ENCODE measurements at regions of chr1 and their contacts with region 1.

Region 1: DNA sequence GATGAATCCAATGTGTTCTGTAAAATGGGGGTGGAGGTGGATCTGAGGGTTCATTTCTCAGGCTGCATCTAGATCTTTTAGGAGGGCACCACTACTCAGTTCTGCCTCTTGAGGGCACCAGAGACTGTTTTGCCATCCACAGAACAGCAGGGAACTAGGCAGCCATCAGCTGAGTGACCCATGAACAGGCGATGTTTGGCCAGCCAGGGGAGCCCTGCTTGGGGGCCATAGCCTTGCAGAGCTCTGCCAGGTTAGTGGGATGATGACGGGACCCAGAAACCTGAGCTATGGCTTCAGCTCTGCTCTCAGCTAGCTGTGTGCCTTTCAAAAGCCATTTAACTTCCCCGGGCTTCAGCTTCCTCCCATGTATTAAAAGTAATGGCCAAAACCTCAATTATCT is 13.4 kb upstream of the NOS1AP start:
- DNase-seq: no peak
- H3K4me3 ChIP-seq: no peak overlapping the region
- H3K27ac ChIP-seq: no peak overlapping the region
- H3K4me1 ChIP-seq: no peaks in the 10 kb centered on the region
- H3K27me3 ChIP-seq: no peaks in the 10 kb centered on the region
- CTCF ChIP-seq: peak; percentile 64 to 83 (median 81)
- POLR2A ChIP-seq: no peak

Region 2: DNA sequence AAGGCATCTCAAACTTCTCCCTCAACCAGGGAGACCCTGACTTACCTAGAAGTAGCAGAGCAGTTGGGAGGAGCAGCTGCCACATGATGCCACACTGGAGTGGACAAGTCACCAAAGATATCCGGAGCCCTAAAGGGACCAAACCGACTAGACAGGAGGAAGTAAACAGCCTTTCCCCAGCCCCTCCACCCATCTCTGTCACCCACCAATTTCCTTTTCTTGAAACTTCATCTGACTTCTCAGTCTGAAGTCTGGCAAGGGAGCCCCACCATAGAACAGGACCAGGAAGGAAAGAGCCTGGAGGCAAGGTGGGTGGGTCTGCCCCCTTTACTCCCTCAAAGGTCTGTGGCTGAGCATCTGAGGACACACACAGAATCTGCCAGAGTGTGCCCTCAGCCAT is 506.4 kb before region 1 on chr1 and contains the start of gene FCGR3A:
- intact Hi-C with region 1: no loop called
- DNase-seq: no peak
- H3K4me3 ChIP-seq: no peak within 1 kb of the TSS
- H3K27ac ChIP-seq: no peak within 1 kb of the TSS
- H3K4me1 ChIP-seq: no peaks in the 10 kb centered on the region
- H3K27me3 ChIP-seq: no peaks in the 10 kb centered on the region
- CTCF ChIP-seq: no peak
- POLR2A ChIP-seq: no peak
- total RNA-seq, gene FCGR3A: 14.2 TPM

Region 3: GRCh38 chr1:162276493-162276892 is 220.4 kb after region 1 on chr1:
- intact Hi-C with region 1: loop called (anchors 10 kb)
- DNase-seq: no peak
- H3K4me3 ChIP-seq: no peak overlapping the region
- H3K27ac ChIP-seq: no peak overlapping the region
- H3K4me1 ChIP-seq: no peaks in the 10 kb centered on the region
- H3K27me3 ChIP-seq: no peaks in the 10 kb centered on the region
- CTCF ChIP-seq: no peak
- POLR2A ChIP-seq: no peak

Region 4: GRCh38 chr1:162327144-162327793 is 271.2 kb after region 1 on chr1:
- intact Hi-C with region 1: no loop called
- DNase-seq: no peak
- H3K4me3 ChIP-seq: no peak overlapping the region
- H3K27ac ChIP-seq: no peak overlapping the region
- H3K4me1 ChIP-seq: no peaks in the 10 kb centered on the region
- H3K27me3 ChIP-seq: no peaks in the 10 kb centered on the region
- CTCF ChIP-seq: no peak
- POLR2A ChIP-seq: no peak

Region 5: DNA sequence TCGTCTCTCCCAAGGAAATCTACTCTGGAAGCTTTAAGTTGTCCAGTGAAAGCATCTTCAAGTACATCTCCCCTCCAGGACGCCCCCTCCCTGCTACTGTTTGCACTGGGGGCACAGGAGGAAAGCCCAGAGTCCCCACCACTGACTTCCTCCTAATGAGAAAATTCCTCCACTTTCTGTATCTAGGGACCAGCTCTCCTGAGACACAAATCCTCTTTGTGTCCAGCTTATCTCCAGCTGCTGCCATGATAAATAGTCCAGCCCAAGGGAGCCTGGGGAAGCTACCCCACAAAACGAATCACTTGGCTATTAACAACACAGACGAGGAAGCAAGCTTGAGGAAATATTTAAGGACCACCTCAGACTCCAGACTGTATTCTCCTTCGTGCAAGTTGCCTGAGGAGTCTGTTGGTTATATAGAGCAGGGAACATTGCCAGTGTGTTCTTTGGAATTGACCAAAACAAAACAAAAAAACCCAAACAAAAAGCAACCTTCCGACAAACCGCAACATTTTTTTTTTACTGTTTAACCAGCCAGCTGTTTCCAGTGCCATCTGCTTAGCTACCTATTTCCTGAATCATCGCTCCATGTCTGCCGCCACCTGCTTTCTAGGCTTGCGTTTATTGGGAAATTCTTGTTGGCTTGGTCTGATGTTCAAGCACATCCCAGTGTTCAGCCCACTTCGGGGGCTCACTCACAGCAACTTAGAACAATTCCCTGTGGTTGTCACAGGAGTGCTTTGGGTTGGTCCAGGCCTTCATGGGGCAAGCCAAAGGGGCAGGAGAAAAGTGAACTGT is 333.2 kb after region 1 on chr1:
- intact Hi-C with region 1: loop called (anchors 10 kb)
- DNase-seq: peak in 1 of 2 donors; percentile 75
- H3K4me3 ChIP-seq: no peak overlapping the region
- H3K27ac ChIP-seq: peak overlapping the region; percentile 20
- H3K4me1 ChIP-seq: peaks cover 23% of the 10 kb centered on the region
- H3K27me3 ChIP-seq: no peaks in the 10 kb centered on the region
- CTCF ChIP-seq: no peak
- POLR2A ChIP-seq: no peak

Region 6: GRCh38 chr1:162612606-162613400 is 556.8 kb after region 1 on chr1:
- intact Hi-C with region 1: no loop called
- DNase-seq: peak in 1 of 2 donors; percentile 88
- H3K4me3 ChIP-seq: no peak overlapping the region
- H3K27ac ChIP-seq: peak overlapping the region; percentile 62
- H3K4me1 ChIP-seq: no peaks in the 10 kb centered on the region
- H3K27me3 ChIP-seq: no peaks in the 10 kb centered on the region
- CTCF ChIP-seq: no peak
- POLR2A ChIP-seq: no peak

Measured in vagina (tissue), 2 donors.